A549 (cell line): ENCODE measurements at regions of chr17 and their contacts with region 1.

Region 1: GRCh38 chr17:42322382-42323267 is 34.3 kb downstream of the STAT5A start:
- DNase-seq: peak; percentile 97 to 98
- ATAC-seq: peak; percentile 83 to 87
- H3K4me3 ChIP-seq: no peak overlapping the region
- H3K27ac ChIP-seq: peak overlapping the region; percentile 59 to 89
- H3K4me1 ChIP-seq: peaks cover 51% of the 10 kb centered on the region
- CTCF ChIP-seq: peak; percentile 100
- EP300 ChIP-seq: no peak
- POLR2A ChIP-seq: no peak
- RAD21 ChIP-seq: peak; percentile 100

Region 2: DNA sequence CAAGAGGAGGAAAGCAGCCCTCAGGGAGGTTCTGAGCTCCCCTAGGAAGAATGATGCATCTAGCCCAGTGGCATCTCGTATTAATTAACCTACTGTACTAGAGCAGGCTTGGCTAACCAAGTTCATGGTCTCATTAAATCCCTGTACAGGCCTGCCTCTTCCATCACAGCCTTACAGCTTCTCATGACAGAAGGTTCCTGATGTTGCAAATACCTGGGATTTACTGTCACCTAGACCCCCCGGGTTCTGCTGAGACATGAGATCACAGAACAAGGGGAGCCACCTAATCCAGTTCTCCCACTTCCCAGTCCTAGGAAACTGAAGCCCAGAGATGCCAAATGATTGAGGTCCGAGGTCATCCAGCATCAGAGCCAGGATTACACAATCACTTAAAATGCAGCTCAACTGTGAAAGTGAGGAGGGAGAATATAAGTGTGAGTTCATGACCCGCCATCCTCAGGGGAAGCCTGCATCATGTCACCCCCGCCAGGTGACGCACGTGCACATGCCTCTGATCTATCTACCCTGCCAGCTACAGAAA is 427.8 kb before region 1 on chr17:
- CTCF ChIA-PET with region 1: no interaction called
- POLR2A ChIA-PET with region 1: no interaction called
- DNase-seq: peak in 1 of 2 experiments; percentile 57
- ATAC-seq: peak; percentile 46 to 48
- H3K4me3 ChIP-seq: no peak overlapping the region
- H3K27ac ChIP-seq: peak overlapping the region; percentile 67 to 81
- H3K4me1 ChIP-seq: peaks cover 80% of the 10 kb centered on the region
- CTCF ChIP-seq: no peak
- EP300 ChIP-seq: no peak
- POLR2A ChIP-seq: no peak
- RAD21 ChIP-seq: 0 out of 5 replicates have a peak, but pooled peaks of 1 of the 2 experiments have one; percentile 26

Region 3: DNA sequence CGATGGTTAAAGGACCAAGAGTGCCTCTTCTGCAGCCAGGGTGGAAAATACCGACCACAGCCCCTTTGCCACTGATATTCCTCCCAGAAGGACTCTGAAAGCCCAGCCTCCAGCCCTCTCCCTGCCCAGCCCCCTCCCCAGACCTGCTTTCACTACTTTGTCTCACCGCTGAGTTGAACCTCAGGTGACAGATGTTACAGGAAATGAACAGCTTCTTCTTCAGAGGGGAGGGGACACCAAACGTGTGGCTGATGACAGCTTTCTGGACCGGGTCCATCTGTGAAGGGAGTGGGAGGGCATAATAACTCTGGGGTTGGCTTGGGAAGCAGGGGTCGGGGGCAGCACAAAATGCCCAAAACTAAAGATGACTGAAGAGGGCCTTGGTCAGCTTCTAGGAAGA is 288.6 kb before region 1 on chr17:
- CTCF ChIA-PET with region 1: no interaction called
- POLR2A ChIA-PET with region 1: no interaction called
- DNase-seq: no peak
- ATAC-seq: no peak
- H3K4me3 ChIP-seq: no peak overlapping the region
- H3K27ac ChIP-seq: no peak overlapping the region
- H3K4me1 ChIP-seq: no peaks in the 10 kb centered on the region
- CTCF ChIP-seq: no peak
- EP300 ChIP-seq: no peak
- POLR2A ChIP-seq: no peak
- RAD21 ChIP-seq: no peak

Region 4: GRCh38 chr17:42337442-42337841 is 14.8 kb after region 1 on chr17:
- CTCF ChIA-PET with region 1: interaction called, 26 read pairs
- POLR2A ChIA-PET with region 1: no interaction called
- DNase-seq: no peak
- ATAC-seq: no peak
- H3K4me3 ChIP-seq: no peak overlapping the region
- H3K27ac ChIP-seq: no peak overlapping the region
- H3K4me1 ChIP-seq: peaks cover 15% of the 10 kb centered on the region
- CTCF ChIP-seq: no peak
- EP300 ChIP-seq: no peak
- POLR2A ChIP-seq: no peak; the same call in 1 of the 2 replicates
- RAD21 ChIP-seq: no peak

Region 5: GRCh38 chr17:42361781-42362186 is 39.2 kb after region 1 on chr17:
- CTCF ChIA-PET with region 1: interaction called, 14 read pairs
- POLR2A ChIA-PET with region 1: no interaction called
- DNase-seq: peak in 1 of 2 experiments; percentile 39
- ATAC-seq: peak; percentile 48 to 63
- H3K4me3 ChIP-seq: no peak overlapping the region
- H3K27ac ChIP-seq: peak overlapping the region in 1 of 2 experiments; percentile 53; a peak in 3 of 6 replicates
- H3K4me1 ChIP-seq: peaks cover 53% of the 10 kb centered on the region
- CTCF ChIP-seq: no peak
- EP300 ChIP-seq: no peak
- POLR2A ChIP-seq: no peak
- RAD21 ChIP-seq: no peak

Region 6: DNA sequence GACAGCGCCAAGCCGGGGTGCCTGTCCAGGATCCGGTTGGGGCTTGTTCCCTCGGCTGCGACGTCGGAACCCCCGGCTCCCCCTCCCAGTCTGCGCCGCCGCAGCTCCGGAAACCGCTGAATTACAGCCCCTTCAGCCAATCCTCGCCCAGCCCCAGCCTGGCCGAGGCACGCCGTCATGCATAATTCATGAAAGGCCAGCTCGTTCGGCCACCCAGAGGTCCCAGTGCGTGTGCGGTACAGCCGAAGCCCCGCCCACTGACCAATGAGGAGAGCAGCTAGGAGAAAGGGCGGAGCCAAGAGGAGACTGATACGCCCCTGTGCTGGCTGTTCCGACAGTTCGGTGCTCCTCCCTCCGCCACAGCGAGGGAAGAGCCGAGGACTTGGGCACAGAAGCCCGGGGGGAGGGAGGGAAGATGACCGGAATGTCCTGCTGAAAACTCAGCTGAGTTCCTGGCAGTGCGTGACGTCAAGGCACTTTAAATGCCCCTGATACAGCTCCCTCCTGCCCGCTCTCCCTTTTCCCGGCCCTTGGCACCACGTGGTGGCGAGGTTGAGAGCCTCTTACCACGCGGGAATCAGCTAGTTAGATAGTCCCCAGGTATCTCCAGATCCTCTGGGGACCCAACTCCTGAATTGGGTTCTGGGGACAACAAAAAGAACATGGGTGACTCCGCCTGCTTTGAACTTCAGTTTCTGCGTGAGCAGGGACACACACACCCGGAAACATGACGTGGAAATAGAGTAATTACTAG is 65.9 kb after region 1 on chr17 and contains the start of gene STAT3:
- CTCF ChIA-PET with region 1: interaction called, 1,360 read pairs
- POLR2A ChIA-PET with region 1: interaction called, 8 read pairs
- DNase-seq: peak; percentile 99 to 100
- ATAC-seq: peak; percentile 94 to 98
- H3K4me3 ChIP-seq: peak within 1 kb of the TSS; percentile 88
- H3K27ac ChIP-seq: peak within 1 kb of the TSS; percentile 94 to 96
- H3K4me1 ChIP-seq: peaks cover 28% of the 10 kb centered on the region
- CTCF ChIP-seq: 0 out of 3 replicates have a peak, but pooled peaks have one; percentile 12
- EP300 ChIP-seq: peak; percentile 48 to 80; a peak in 3 of 5 replicates
- POLR2A ChIP-seq: peak; percentile 81
- RAD21 ChIP-seq: peak; percentile 29 to 56; a peak in 3 of 5 replicates
- polyA plus RNA-seq, gene STAT3: 72.8 and 81.9 TPM in 2 replicates